Body of pancreas (tissue), 4 donors: ENCODE measurements at regions of chr13 and their contacts with region 1.

Region 1: DNA sequence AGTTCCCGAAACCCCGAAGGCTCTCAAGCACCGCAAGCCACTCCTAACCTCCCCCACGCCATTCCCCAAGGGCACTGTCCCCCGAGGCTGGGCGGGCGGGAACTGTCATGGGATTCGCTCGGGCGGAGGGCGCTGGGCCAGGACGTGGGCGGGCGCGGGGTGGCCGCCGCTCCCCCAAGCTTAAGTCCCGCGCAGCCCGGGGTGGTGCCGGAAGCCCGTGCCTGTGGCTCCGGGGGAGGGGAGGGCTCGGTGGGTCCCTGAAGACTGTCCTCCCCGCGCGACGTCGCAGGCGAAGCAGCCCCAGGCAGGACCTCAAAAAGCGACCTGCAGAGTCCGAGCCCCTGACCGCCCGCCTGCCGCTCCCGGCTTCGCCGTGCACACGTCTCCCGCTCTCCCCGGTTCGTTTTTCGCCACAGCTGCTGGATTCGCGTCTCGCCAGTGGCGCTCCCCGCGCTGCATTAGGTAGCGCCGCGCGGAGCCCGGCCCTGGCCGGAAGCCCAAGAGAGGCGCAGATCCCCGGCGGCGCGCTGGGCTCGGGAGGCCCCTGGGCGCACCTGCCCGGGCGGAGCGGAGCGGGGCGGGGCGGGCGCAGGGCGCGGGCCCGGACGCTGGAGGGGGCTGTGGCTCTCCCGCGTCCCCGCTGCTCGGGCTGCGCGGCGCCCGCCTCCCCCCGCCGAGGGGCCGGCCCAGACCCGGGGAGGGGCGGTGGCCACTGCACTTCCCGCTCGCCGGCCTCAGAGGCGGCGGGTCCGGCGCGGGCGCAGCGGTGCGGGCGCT is at the start of gene FARP1:
- DNase-seq: peak; percentile 86 to 90 (median 87)
- ATAC-seq: peak; percentile 92
- H3K4me3 ChIP-seq: peak within 1 kb of the TSS; percentile 78 to 92
- H3K27ac ChIP-seq: peak within 1 kb of the TSS; percentile 74 to 95 (median 90)
- H3K4me1 ChIP-seq: peaks cover 42% of the 10 kb centered on the region
- H3K27me3 ChIP-seq: no peaks in the 10 kb centered on the region
- CTCF ChIP-seq: peak in 4 of 7 experiments; percentile 60 to 97 (median 80)
- POLR2A ChIP-seq: peak; percentile 61 to 85 (median 83)
- total RNA-seq, gene FARP1: 89.5 to 93.6 TPM

Region 2: GRCh38 chr13:97116754-97117153 is 1025.8 kb before region 1 on chr13:
- intact Hi-C with region 1: no loop called
- DNase-seq: peak in 1 of 4 donors; percentile 40
- ATAC-seq: peak; percentile 55
- H3K4me3 ChIP-seq: no peak overlapping the region
- H3K27ac ChIP-seq: peak overlapping the region in 2 of 4 donors; percentile 22 to 47
- H3K4me1 ChIP-seq: peaks cover 19% of the 10 kb centered on the region
- H3K27me3 ChIP-seq: no peaks in the 10 kb centered on the region
- CTCF ChIP-seq: no peak
- POLR2A ChIP-seq: no peak

Region 3: DNA sequence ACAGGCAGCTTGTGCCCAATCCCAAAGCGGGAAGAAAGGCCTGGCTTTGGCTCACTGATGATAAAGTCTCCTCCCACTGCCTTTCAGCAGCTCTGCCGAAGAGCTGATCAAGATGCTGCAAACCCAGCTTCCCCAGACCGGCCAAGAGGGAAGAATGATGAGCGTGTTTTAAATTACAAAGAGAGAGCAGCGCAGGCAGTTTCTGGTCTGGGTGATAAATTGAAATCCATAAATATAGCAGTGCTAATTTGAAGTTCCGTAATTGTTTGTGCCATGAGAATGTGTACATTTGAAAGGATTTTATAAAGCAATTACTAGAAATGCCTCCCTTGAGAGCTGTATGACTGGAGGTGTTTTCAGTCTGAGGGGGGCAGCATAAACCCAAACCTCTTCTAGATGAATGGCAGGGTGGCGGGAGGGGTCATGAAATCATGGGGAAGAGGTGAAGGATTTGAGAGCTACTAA is 262.6 kb after region 1 on chr13:
- intact Hi-C with region 1: loop called (anchors 10 kb)
- DNase-seq: peak in 3 of 4 donors; percentile 37 to 51 (median 41)
- ATAC-seq: no peak
- H3K4me3 ChIP-seq: no peak overlapping the region
- H3K27ac ChIP-seq: peak overlapping the region; percentile 25 to 66 (median 48)
- H3K4me1 ChIP-seq: peaks cover 26% of the 10 kb centered on the region
- H3K27me3 ChIP-seq: no peaks in the 10 kb centered on the region
- CTCF ChIP-seq: peak in 4 of 7 experiments; percentile 17 to 30 (median 26)
- POLR2A ChIP-seq: no peak

Region 4: DNA sequence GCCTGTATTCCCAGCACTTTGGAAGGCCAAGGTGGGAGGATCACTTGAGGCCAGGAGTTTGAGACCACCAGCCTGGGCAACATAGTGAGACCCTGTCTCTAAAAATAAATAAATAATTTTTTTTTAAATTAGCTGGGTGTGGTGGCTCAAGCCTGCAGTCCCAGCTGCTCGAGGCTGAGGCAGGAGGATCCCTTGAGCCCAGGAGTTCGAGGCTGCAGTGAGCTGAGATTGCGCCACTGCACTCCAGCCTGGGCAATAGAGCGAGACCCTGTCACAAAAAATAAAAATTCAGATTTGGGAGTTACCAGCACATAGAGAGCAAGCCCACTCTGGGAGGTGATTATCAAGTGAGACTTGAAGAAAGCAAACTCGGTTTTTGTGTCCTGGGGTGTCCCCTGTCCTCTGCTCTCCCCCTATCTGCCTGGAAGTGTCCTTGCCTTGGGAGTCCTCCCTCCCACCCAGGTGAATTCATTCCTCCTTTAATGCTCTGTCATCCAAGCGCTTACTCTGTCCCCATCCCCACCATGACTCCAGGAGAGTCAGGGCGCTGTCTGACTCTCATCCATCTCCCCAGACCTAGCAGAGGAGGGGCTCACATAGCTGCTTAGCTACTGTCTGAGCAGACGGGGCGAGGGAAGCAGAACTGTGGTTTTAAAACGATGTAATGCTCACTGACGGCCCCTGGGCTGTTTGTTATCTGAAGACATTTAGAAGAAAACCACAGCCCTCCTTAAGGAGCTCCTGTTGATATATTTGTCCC is 287.6 kb after region 1 on chr13:
- intact Hi-C with region 1: loop called (anchors 10 kb)
- DNase-seq: no peak
- ATAC-seq: no peak
- H3K4me3 ChIP-seq: no peak overlapping the region
- H3K27ac ChIP-seq: peak overlapping the region in 3 of 4 donors; percentile 44 to 61 (median 47)
- H3K4me1 ChIP-seq: peaks cover 12% of the 10 kb centered on the region
- H3K27me3 ChIP-seq: no peaks in the 10 kb centered on the region
- CTCF ChIP-seq: no peak
- POLR2A ChIP-seq: no peak